ENCODE measurements at regions of chr3 and their contacts with region 1.

Region 1: GRCh38 chr3:34687671-34688070 is 889.2 kb downstream of the PDCD6IP start:
- DNase-seq: no peak
- ATAC-seq: no peak
- H3K4me3 ChIP-seq: no peak overlapping the region
- H3K27ac ChIP-seq: no peak overlapping the region
- H3K4me1 ChIP-seq: no peaks in the 10 kb centered on the region
- H3K27me3 ChIP-seq: no peaks in the 10 kb centered on the region
- CTCF ChIP-seq: no peak

Region 2: DNA sequence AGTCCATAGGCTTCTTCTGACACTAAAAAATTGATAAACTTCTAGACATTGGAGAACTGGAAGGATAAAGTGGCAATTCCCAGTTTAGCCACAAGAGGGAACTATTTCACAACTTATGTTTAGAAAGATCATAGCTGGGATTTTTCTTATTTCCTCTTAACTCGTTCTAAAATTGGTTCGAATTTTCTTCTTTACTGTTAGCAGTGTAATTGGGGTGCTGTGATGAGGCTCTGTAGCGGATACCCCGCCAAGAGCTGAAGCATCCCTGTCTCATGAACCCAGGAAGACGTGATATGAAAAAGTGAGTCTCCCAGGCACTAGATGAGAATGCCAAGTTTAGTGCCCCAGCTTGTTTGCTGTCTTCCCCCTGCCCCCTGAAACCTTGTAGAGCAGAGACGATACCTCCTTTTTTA is 804.1 kb before region 1 on chr3:
- intact Hi-C with region 1: loop called in 1 of 2 experiments (anchors 5 kb)
- DNase-seq: peak in 2 of 4 donors; percentile 34 to 51
- ATAC-seq: peak; percentile 46
- H3K4me3 ChIP-seq: no peak overlapping the region
- H3K27ac ChIP-seq: no peak overlapping the region
- H3K4me1 ChIP-seq: peaks cover 0 to 4% of the 10 kb centered on the region in 2 donors
- H3K27me3 ChIP-seq: peaks cover 0 to 5% of the 10 kb centered on the region in 2 donors
- CTCF ChIP-seq: peak; percentile 82 to 85

Region 3: GRCh38 chr3:34533451-34533850 is 154.2 kb before region 1 on chr3:
- intact Hi-C with region 1: no loop called
- DNase-seq: no peak
- ATAC-seq: no peak
- H3K4me3 ChIP-seq: no peak overlapping the region
- H3K27ac ChIP-seq: no peak overlapping the region
- H3K4me1 ChIP-seq: no peaks in the 10 kb centered on the region
- H3K27me3 ChIP-seq: no peaks in the 10 kb centered on the region
- CTCF ChIP-seq: no peak